Adrenal gland (tissue), 19 donors: ENCODE measurements at regions of chr19 and their contacts with region 1.

Region 1: DNA sequence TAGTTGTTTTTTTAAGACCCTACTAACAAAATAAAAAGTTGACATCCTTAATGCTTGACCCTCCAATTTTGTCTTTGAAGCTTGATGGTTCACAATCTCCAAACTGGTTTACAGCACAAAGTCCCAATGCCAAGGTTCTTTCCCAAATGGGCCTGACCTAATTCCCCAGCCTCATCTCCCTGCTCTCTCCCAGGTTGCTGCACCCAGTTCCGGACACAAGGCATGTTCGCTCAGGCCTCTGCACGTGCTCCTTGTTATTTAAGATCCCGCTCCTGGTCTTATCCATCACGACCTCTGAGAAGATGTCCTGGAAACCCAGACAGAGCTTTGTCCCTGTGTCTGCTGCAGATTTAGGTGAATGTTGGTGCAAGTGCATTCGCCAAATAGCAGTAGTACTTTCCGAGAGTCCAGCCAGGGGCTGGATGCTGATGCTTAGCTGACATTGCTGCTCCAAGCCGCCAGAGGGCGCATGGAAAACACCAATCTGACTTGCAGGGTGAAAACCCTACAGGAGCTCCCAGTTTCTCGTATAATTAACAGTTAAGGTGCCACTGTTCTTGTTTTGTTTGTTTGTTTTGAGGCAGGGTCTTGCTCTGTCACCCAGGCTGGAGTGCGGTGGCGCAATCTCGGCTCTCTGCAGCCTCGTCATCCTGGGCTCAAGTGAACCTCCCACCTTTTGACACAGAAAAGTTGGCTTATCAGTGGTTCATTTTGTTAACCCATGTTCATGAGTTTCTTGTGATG is 18.5 kb downstream of the LYPD3 start:
- DNase-seq: peak; percentile 69 to 90 (median 77)
- H3K4me3 ChIP-seq: no peak overlapping the region
- H3K27ac ChIP-seq: no peak overlapping the region
- H3K4me1 ChIP-seq: peaks cover 0 to 1% of the 10 kb centered on the region in 2 donors
- H3K27me3 ChIP-seq: no peaks in the 10 kb centered on the region
- CTCF ChIP-seq: peak; percentile 88 to 96 (median 96)
- POLR2A ChIP-seq: no peak

Region 2: GRCh38 chr19:43498233-43498842 is 51.4 kb after region 1 on chr19:
- intact Hi-C with region 1: no loop called
- DNase-seq: no peak
- H3K4me3 ChIP-seq: no peak overlapping the region
- H3K27ac ChIP-seq: peak overlapping the region in 1 of 5 donors; percentile 78
- H3K4me1 ChIP-seq: peaks cover 15 to 17% of the 10 kb centered on the region in 2 donors
- H3K27me3 ChIP-seq: no peaks in the 10 kb centered on the region
- CTCF ChIP-seq: no peak
- POLR2A ChIP-seq: no peak

Region 3: GRCh38 chr19:43511324-43511723 is 64.4 kb after region 1 on chr19:
- intact Hi-C with region 1: loop called in 1 of 2 experiments (anchors 5 kb)
- DNase-seq: no peak
- H3K4me3 ChIP-seq: no peak overlapping the region
- H3K27ac ChIP-seq: no peak overlapping the region
- H3K4me1 ChIP-seq: no peaks in the 10 kb centered on the region
- H3K27me3 ChIP-seq: no peaks in the 10 kb centered on the region
- CTCF ChIP-seq: no peak
- POLR2A ChIP-seq: no peak

Region 4: DNA sequence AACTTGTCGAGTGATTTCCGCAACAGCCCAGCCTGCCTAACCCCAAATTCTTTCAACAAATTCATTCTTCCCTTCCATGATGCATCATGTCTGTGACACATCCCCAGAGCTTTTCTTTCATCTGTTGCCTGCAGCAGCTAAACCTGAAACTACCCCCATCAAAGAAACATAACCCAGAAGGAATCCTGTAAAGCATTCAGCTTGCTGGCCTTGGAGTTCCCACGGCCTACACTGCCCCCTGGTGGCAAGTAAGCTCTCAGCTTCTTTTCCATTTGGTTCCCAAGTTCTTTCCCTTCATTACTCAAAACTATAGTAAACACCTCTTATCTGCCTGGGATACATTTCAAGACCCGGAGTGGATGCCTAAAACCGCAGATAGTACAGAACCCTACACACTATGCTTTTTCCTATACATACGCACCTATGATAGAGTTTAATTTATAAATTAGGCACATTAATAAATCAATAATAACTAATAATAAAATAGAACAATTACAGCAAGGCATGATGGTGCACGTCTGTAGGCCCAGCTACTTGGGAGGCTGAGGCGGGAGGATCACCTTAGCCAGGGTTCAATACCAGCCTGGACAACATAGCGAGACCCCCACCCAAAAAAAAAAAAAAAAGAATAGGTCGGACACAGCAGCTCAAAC is 72.6 kb after region 1 on chr19:
- intact Hi-C with region 1: loop called (anchors 2 to 5 kb)
- DNase-seq: peak; percentile 80 to 91 (median 82)
- H3K4me3 ChIP-seq: no peak overlapping the region
- H3K27ac ChIP-seq: no peak overlapping the region
- H3K4me1 ChIP-seq: peaks cover 0 to 3% of the 10 kb centered on the region in 2 donors
- H3K27me3 ChIP-seq: no peaks in the 10 kb centered on the region
- CTCF ChIP-seq: peak; percentile 87 to 94 (median 90)
- POLR2A ChIP-seq: no peak